ENCODE measurements at regions of chr2 and their contacts with region 1.

Region 1: GRCh38 chr2:230614913-230615332 is 97.7 kb upstream of the CAB39 start:
- DNase-seq: peak; percentile 85
- ATAC-seq: peak; percentile 88
- H3K4me3 ChIP-seq: peak overlapping the region; percentile 53; the same call in 1 of the 2 replicates
- H3K27ac ChIP-seq: peak overlapping the region; percentile 60
- H3K4me1 ChIP-seq: peaks cover 22% of the 10 kb centered on the region
- H3K27me3 ChIP-seq: no peaks in the 10 kb centered on the region
- CTCF ChIP-seq: peak in 1 of 3 experiments; percentile 13; a peak in 1 of 6 replicates
- EP300 ChIP-seq: no peak
- POLR2A ChIP-seq: peak; percentile 45; the same call in 1 of the 2 replicates
- RAD21 ChIP-seq: peak; percentile 44; the same call in 1 of the 2 replicates

Region 2: GRCh38 chr2:230007931-230008707 is 606.8 kb before region 1 on chr2:
- CTCF ChIA-PET with region 1: interaction called, 14 read pairs
- POLR2A ChIA-PET with region 1: no interaction called
- RAD21 ChIA-PET with region 1: interaction called, 5 read pairs
- SMC1A ChIA-PET with region 1: interaction called, 11 read pairs
- in situ Hi-C with region 1: loop called (anchors 5 kb)
- intact Hi-C with region 1: loop called (anchors 1 kb)
- DNase-seq: peak; percentile 26
- ATAC-seq: peak; percentile 88
- H3K4me3 ChIP-seq: no peak overlapping the region
- H3K27ac ChIP-seq: no peak overlapping the region
- H3K4me1 ChIP-seq: no peaks in the 10 kb centered on the region
- H3K27me3 ChIP-seq: no peaks in the 10 kb centered on the region
- CTCF ChIP-seq: peak; percentile 80 to 84 (median 80)
- EP300 ChIP-seq: no peak
- POLR2A ChIP-seq: no peak
- RAD21 ChIP-seq: peak; percentile 98

Region 3: GRCh38 chr2:230225486-230225885 is 389.4 kb before region 1 on chr2 and contains the start of gene SP140:
- CTCF ChIA-PET with region 1: interaction called, 5 read pairs
- POLR2A ChIA-PET with region 1: no interaction called
- RAD21 ChIA-PET with region 1: interaction called, 9 read pairs
- SMC1A ChIA-PET with region 1: interaction called, 7 read pairs
- in situ Hi-C with region 1: no loop called
- intact Hi-C with region 1: loop called (anchors 2 kb)
- DNase-seq: peak; percentile 80
- ATAC-seq: peak; percentile 77
- H3K4me3 ChIP-seq: peak within 1 kb of the TSS; percentile 72
- H3K27ac ChIP-seq: peak within 1 kb of the TSS; percentile 68
- H3K4me1 ChIP-seq: peaks cover 48% of the 10 kb centered on the region
- H3K27me3 ChIP-seq: no peaks in the 10 kb centered on the region
- CTCF ChIP-seq: 0 out of 6 replicates have a peak, but pooled peaks of 1 of the 3 experiments have one; percentile 4
- EP300 ChIP-seq: no peak
- POLR2A ChIP-seq: peak; percentile 93
- RAD21 ChIP-seq: no peak
- polyA plus RNA-seq, gene SP140: 61.7 to 93.9 TPM

Region 4: DNA sequence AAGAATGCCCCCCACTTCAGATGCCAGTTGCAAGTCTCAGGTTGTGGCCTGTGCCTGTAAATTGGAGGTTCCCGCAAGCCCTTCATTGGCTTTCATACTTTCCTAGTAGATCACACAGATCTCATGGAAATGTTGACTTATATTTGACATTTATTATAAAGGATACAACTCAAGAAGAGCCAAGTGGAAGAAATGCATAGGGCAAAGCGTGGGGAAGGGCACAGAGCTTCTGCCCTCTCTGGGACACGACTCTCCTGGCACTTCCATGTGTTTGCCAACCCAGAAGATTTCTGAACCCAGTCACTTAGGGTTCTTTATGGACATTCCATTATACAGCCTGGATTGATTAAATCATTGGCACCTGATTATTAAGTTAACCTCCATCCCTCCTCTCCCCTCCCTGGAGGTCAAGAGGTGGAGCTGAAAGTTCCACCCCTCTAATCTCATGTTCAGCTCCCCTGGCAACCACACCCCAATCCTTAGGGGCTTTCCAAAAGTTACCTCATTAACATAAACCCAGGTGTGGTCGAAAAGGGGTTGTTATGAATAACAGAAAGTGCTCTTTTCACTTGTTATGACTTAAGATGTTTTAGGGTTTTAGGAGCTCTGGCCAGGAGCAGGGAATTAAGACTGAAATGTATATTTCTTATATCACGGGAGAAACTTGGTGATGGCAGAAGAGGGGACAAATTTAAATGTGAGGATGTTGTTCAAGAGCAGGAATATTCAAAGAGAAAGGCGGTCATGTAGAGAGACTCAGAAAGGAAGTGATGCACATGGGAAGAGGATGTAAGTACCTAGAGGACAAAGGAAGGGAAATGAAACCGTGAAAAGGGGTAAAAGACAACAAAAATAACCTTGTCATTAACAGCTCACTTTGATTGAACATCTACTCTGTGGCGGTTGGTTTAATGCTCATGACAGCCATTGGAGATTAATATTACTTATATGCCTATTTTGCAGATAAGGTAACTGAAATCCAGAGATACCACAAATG is 167.2 kb before region 1 on chr2:
- CTCF ChIA-PET with region 1: no interaction called
- POLR2A ChIA-PET with region 1: interaction called, 4 read pairs
- RAD21 ChIA-PET with region 1: interaction called, 5 read pairs
- SMC1A ChIA-PET with region 1: interaction called, 12 read pairs
- in situ Hi-C with region 1: no loop called
- intact Hi-C with region 1: no loop called
- DNase-seq: peak; percentile 84
- ATAC-seq: peak; percentile 87
- H3K4me3 ChIP-seq: 0 out of 2 replicates have a peak overlapping the region, but pooled peaks have one; percentile 13
- H3K27ac ChIP-seq: peak overlapping the region; percentile 89
- H3K4me1 ChIP-seq: peaks cover 53% of the 10 kb centered on the region
- H3K27me3 ChIP-seq: no peaks in the 10 kb centered on the region
- CTCF ChIP-seq: no peak
- EP300 ChIP-seq: peak; percentile 80 to 84; a peak in 3 of 4 replicates
- POLR2A ChIP-seq: no peak
- RAD21 ChIP-seq: no peak

Region 5: DNA sequence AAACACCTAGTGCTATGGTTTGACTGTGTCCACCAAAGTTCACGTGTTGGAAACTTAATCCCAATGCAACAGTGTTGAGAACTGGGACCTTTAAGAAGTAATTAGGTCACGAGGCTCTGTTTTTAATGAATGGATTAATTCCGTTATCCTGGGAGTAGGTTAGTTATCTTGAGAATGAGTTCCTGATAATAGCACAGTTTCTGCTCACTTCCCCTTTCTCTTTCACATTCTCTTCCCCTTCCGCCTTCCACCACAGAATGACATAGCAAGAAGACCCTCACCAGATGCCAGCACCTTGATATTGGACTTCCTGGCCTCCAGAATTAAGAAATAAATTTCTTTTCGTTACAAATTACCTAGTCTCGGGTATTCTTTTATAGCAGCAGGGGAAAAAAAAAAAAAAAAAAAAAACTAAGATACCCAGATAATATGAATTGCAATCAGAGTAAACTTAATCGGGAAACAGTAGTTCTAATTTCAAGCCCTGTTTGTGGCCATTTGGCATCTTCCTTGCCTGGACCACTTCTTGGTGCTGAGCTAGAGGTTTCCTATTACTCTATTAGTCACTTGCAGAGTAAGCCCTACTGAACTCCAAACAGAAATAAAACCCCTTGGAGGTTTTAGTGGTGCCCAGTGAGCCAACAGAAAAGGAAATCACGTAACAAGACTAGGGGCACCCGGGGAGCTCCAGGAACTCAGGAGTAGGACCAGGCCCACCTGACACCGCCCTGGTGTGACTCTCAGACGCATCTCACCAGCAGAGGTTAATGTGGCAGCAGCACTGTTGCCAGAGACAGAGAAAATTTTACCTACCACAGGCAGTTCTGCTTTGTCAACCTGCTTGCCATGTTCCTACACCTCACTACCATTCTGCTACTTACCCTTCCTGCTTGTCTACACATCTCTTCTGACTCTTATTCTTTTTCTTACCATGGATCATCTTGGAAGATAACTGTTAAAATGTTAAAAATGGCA is 49.8 kb before region 1 on chr2:
- CTCF ChIA-PET with region 1: no interaction called
- POLR2A ChIA-PET with region 1: no interaction called
- RAD21 ChIA-PET with region 1: no interaction called
- SMC1A ChIA-PET with region 1: no interaction called
- in situ Hi-C with region 1: no loop called
- intact Hi-C with region 1: no loop called
- DNase-seq: no peak
- ATAC-seq: peak; percentile 82
- H3K4me3 ChIP-seq: peak overlapping the region; percentile 18; the same call in 1 of the 2 replicates
- H3K27ac ChIP-seq: peak overlapping the region; percentile 54; the same call in 1 of the 2 replicates
- H3K4me1 ChIP-seq: peaks cover 3% of the 10 kb centered on the region; the same call in 1 of the 2 replicates
- H3K27me3 ChIP-seq: no peaks in the 10 kb centered on the region
- CTCF ChIP-seq: no peak
- EP300 ChIP-seq: no peak
- POLR2A ChIP-seq: no peak
- RAD21 ChIP-seq: no peak

Region 6: DNA sequence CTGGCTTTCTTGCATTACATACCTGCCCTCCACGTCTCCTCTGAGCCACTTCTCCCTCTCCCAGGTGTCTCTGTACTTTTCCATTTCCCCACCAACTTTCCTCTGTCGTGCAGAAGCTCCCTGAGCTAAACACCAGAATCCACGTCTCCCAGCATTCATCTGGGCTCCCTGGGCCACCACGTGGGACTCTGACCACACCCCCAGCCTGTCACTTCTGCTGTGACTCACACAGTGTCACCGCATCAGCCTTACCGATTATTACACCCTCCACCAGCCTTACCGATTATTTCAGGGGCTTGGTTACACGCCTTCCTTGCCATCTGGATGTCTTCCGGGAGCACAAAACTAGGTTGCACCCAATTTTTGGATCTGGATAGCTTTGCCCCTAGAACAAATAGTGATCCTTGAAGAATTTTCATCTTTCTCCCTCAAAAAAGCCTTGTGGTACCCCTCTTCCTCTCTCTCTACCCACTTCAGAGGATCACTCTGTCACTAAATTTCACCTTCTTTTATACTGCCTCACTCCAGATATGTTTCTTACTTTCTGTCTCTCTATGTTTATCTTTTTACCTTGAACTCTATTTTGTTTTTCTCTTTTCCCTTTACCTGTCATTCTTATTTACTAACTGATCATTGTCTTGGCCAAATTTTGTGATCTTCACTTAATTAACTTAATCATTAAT is 39.1 kb before region 1 on chr2:
- CTCF ChIA-PET with region 1: no interaction called
- POLR2A ChIA-PET with region 1: no interaction called
- RAD21 ChIA-PET with region 1: no interaction called
- SMC1A ChIA-PET with region 1: no interaction called
- in situ Hi-C with region 1: no loop called
- intact Hi-C with region 1: no loop called
- DNase-seq: no peak
- ATAC-seq: no peak
- H3K4me3 ChIP-seq: no peak overlapping the region
- H3K27ac ChIP-seq: no peak overlapping the region
- H3K4me1 ChIP-seq: peaks cover 21% of the 10 kb centered on the region
- H3K27me3 ChIP-seq: no peaks in the 10 kb centered on the region
- CTCF ChIP-seq: no peak
- EP300 ChIP-seq: no peak
- POLR2A ChIP-seq: no peak
- RAD21 ChIP-seq: no peak

Region 7: DNA sequence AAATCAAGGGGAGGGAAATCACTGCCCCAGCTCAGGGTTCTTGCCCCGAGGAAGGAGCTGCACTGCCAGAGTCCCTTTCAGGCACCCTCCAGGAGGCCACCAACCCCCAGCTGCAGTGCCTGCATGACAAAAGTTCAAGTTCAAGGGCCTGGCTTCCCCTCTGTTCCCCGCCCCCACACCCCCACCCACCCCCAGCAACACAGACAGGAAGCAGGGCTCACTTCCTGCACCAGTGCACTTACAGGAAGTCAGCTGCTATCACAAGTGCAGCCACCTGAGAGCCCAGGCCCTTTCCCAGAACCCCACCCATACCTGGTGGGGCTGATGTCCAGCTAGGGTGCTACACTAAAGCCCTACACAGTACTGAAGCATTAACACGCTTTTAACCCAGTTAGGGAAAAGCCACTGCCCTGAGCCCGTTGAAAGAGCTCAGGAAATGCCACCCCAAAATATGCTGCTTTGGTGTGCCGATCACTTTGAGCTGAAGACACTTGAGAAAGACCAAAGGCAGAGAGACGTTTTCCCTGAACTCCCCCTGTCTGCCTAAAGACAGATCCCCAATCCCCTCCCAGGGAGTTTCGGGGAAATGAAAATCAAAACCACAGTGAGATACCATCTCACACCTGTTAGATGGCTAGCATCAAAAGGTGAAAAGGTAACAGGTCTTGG is 12.2 kb before region 1 on chr2:
- CTCF ChIA-PET with region 1: interaction called, 16 read pairs
- POLR2A ChIA-PET with region 1: interaction called, 17 read pairs
- RAD21 ChIA-PET with region 1: interaction called, 26 read pairs
- SMC1A ChIA-PET with region 1: interaction called, 22 read pairs
- in situ Hi-C with region 1: no loop called
- intact Hi-C with region 1: no loop called
- DNase-seq: no peak
- ATAC-seq: peak; percentile 70
- H3K4me3 ChIP-seq: peak overlapping the region; percentile 32; the same call in 1 of the 2 replicates
- H3K27ac ChIP-seq: peak overlapping the region; percentile 86
- H3K4me1 ChIP-seq: peaks cover 47% of the 10 kb centered on the region
- H3K27me3 ChIP-seq: no peaks in the 10 kb centered on the region
- CTCF ChIP-seq: no peak
- EP300 ChIP-seq: no peak
- POLR2A ChIP-seq: peak; percentile 74
- RAD21 ChIP-seq: peak; percentile 16; the same call in 1 of the 2 replicates

Region 8: DNA sequence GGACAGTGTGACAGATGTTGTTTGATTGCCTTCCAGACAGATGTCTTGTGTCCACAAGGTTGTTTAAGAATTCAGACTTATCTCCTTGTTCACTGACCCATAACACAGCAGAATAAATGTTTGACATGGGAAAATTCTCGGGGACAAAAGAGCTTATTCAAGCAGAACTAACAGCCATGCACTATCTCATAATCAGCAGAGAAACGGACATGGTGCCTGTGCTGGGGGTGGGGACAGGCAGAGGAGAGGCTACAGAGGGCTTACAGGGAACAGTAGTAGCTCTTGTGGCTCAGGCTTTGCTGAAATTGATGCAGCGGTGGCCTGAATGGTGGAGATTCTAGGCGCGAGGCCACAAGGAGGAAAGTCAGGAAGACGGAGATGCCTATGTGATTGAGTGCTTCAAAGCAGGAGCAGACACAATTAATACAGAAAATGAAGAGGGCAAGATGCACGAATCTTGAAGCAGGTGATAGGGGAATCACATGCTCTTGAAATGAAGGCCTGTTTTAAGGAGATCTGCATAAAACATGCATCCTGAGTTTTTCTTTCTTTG is 35.7 kb after region 1 on chr2:
- CTCF ChIA-PET with region 1: interaction called, 5 read pairs
- POLR2A ChIA-PET with region 1: interaction called, 11 read pairs
- RAD21 ChIA-PET with region 1: interaction called, 81 read pairs
- SMC1A ChIA-PET with region 1: interaction called, 72 read pairs
- in situ Hi-C with region 1: no loop called
- intact Hi-C with region 1: no loop called
- DNase-seq: peak; percentile 93
- ATAC-seq: peak; percentile 97
- H3K4me3 ChIP-seq: peak overlapping the region; percentile 0; the same call in 1 of the 2 replicates
- H3K27ac ChIP-seq: peak overlapping the region; percentile 54
- H3K4me1 ChIP-seq: peaks cover 12% of the 10 kb centered on the region
- H3K27me3 ChIP-seq: no peaks in the 10 kb centered on the region
- CTCF ChIP-seq: no peak
- EP300 ChIP-seq: peak; percentile 33 to 68; a peak in 2 of 4 replicates
- POLR2A ChIP-seq: no peak
- RAD21 ChIP-seq: peak; percentile 22; the same call in 1 of the 2 replicates

Region 9: GRCh38 chr2:230762317-230762896 is 147.5 kb after region 1 on chr2:
- CTCF ChIA-PET with region 1: interaction called, 10 read pairs
- POLR2A ChIA-PET with region 1: interaction called, 3 read pairs
- RAD21 ChIA-PET with region 1: interaction called, 4 read pairs
- SMC1A ChIA-PET with region 1: interaction called, 6 read pairs
- in situ Hi-C with region 1: no loop called
- intact Hi-C with region 1: no loop called
- DNase-seq: no peak
- ATAC-seq: peak; percentile 97
- H3K4me3 ChIP-seq: no peak overlapping the region
- H3K27ac ChIP-seq: no peak overlapping the region
- H3K4me1 ChIP-seq: peaks cover 14% of the 10 kb centered on the region
- H3K27me3 ChIP-seq: no peaks in the 10 kb centered on the region
- CTCF ChIP-seq: peak; percentile 55 to 75 (median 61)
- EP300 ChIP-seq: no peak
- POLR2A ChIP-seq: no peak
- RAD21 ChIP-seq: peak; percentile 50

Measured in GM12878 (cell line).